A673 (cell line): ENCODE measurements at regions of chr10 and their contacts with region 1.

Region 1: GRCh38 chr10:22988581-22989360 is 60.9 kb downstream of the ARMC3 start:
- DNase-seq: peak; percentile 76
- H3K4me3 ChIP-seq: no peak overlapping the region
- H3K27ac ChIP-seq: no peak overlapping the region
- H3K4me1 ChIP-seq: peaks cover 5% of the 10 kb centered on the region
- H3K27me3 ChIP-seq: no peaks in the 10 kb centered on the region
- CTCF ChIP-seq: peak; percentile 92

Region 2: GRCh38 chr10:21732067-21732772 is 1256.6 kb before region 1 on chr10:
- CTCF ChIA-PET with region 1: no interaction called
- POLR2A ChIA-PET with region 1: interaction called, 20 read pairs
- intact Hi-C with region 1: no loop called
- DNase-seq: peak; percentile 88
- H3K4me3 ChIP-seq: no peak overlapping the region
- H3K27ac ChIP-seq: no peak overlapping the region
- H3K4me1 ChIP-seq: peaks cover 73% of the 10 kb centered on the region
- H3K27me3 ChIP-seq: no peaks in the 10 kb centered on the region
- CTCF ChIP-seq: peak; percentile 94

Region 3: GRCh38 chr10:22340362-22341189 is 648.2 kb before region 1 on chr10:
- CTCF ChIA-PET with region 1: no interaction called
- POLR2A ChIA-PET with region 1: no interaction called
- intact Hi-C with region 1: loop called (anchors 10 kb)
- DNase-seq: peak; percentile 90
- H3K4me3 ChIP-seq: peak overlapping the region; percentile 73
- H3K27ac ChIP-seq: peak overlapping the region; percentile 92
- H3K4me1 ChIP-seq: peaks cover 22% of the 10 kb centered on the region
- H3K27me3 ChIP-seq: peaks cover 78% of the 10 kb centered on the region
- CTCF ChIP-seq: no peak

Region 4: DNA sequence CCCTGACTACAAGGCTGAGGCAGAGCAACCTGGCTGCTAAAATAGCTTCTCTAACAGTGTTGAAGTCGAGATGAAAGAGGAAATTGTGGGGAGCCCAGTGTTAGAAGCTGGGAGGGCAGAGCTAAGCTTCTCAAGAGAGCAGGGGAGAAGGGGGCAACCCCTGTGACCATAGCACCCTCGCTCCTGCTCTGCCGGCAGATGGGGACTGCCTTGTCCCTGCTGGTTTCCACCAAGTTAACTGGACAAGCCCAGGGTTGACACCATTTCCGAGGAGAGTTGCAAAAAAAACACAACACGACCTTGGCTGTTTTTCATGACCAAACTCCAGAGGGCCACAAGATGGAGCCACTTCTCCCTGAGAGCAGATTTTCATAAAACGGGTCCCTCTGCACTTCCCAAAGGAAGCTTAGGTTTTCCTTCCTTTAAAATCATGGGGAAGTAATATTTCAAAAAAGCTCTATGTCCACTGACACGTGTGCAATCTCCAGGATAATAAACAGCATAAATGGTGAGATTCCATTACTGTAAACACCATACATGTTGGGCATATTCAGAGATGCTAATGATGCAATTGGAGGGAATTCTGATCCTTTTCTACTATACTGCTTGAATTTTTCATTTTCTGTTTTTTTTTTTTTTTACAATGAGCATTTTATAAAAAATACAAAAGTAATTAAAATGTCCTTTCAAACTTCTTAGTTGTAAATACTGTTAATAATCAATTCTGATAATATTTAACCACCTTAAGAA is 414.8 kb before region 1 on chr10:
- CTCF ChIA-PET with region 1: interaction called, 5 read pairs
- POLR2A ChIA-PET with region 1: no interaction called
- intact Hi-C with region 1: loop called (anchors 5 kb)
- DNase-seq: peak; percentile 54
- H3K4me3 ChIP-seq: no peak overlapping the region
- H3K27ac ChIP-seq: no peak overlapping the region
- H3K4me1 ChIP-seq: no peaks in the 10 kb centered on the region
- H3K27me3 ChIP-seq: no peaks in the 10 kb centered on the region
- CTCF ChIP-seq: peak; percentile 68

Region 5: DNA sequence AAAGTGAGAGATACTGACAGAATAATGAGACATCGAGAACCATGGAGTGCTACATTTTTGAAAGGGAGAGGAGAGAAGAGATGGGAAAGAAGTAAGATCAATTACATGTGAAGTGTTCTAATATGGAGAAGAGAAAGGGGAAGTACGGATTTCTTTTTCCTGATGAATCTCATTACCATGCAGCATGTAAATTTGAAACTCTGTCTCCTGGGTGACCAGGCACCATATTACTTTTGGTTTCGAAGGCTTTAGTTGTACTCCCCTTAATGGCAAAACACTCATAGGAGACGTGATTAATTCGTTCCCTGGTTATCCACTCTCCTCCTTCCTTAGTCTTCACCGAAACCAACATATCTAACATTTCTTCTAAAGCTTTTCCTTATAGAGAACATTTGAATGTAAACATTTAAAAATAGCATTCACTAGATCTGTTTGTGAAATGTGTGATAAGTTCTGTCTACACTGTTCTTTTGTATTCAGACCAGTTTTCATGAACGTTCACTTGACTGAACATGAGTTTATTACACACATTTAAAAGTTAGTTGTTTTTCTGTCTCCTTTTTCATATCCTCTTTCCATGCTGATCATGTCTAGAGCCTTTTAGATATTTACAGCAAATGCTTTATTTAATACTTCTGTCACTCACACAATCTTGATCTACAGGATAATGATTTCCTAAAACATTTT is 26.4 kb after region 1 on chr10:
- CTCF ChIA-PET with region 1: no interaction called
- POLR2A ChIA-PET with region 1: no interaction called
- intact Hi-C with region 1: no loop called
- DNase-seq: no peak
- H3K4me3 ChIP-seq: no peak overlapping the region
- H3K27ac ChIP-seq: no peak overlapping the region
- H3K4me1 ChIP-seq: no peaks in the 10 kb centered on the region
- H3K27me3 ChIP-seq: peaks cover 13% of the 10 kb centered on the region
- CTCF ChIP-seq: no peak

Region 6: DNA sequence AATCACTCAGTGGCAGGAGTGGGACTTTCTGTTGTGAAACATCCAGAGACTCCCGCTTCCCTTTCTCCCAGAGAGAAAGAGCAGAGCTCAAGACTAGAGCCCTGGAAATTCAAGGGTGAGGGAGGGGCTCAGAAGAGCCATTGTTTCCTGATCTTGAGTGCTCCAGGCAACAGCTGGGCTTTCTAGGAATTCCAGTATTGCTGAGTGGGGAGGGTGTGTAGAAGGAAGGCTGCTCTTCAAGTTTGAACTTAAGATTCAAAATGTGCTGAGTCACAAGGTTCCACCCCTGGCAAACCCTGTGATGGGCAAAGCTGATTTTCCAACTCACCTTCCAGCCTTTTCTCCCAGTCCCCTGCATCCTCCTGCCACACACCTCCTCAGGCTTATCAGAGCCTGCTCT is 64.3 kb after region 1 on chr10:
- CTCF ChIA-PET with region 1: no interaction called
- POLR2A ChIA-PET with region 1: no interaction called
- intact Hi-C with region 1: no loop called
- DNase-seq: peak; percentile 56
- H3K4me3 ChIP-seq: no peak overlapping the region
- H3K27ac ChIP-seq: no peak overlapping the region
- H3K4me1 ChIP-seq: peaks cover 39% of the 10 kb centered on the region
- H3K27me3 ChIP-seq: no peaks in the 10 kb centered on the region
- CTCF ChIP-seq: no peak

Region 7: DNA sequence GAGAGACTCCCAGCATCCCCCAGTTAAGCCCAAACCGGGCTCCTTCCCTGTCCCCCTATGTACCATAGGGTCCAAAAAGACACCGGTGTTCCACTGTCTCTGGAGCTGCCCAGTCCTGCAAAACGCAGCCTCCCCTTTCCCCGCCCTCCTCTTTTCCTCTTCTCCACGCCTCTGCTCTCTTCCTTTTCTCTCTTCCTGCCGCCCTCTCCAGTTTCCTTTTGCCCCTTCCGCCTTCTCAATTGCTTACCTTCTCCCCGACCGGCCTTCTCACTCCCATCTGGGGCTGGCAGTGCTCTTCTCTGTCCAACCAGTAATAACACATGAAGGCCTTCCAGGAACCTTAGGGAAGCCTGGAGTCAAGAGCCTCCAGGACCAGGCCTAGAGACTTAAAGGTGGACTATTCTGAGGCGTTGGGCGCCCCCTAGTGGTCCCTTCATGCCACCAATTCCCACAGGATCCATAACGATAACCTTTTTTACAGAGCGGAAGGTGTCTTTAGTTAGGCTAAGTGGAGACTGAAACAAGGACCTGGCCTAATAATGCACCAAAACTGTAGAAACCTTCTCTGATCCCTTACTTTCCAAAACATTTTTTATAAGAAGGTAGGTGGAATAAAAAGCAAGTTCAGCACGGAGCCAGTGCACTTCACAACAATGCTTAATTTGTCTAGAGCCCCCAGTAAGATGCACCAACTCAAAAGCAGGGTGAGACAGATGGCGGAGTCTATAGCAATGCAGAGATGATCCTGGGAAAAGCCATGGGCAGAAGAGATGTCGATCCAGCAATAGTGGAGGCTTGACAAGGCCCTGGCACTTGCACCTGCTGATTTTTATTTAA is 79.4 kb after region 1 on chr10:
- CTCF ChIA-PET with region 1: no interaction called
- POLR2A ChIA-PET with region 1: no interaction called
- intact Hi-C with region 1: loop called (anchors 5 kb)
- DNase-seq: peak; percentile 79
- H3K4me3 ChIP-seq: no peak overlapping the region
- H3K27ac ChIP-seq: no peak overlapping the region
- H3K4me1 ChIP-seq: peaks cover 5% of the 10 kb centered on the region
- H3K27me3 ChIP-seq: no peaks in the 10 kb centered on the region
- CTCF ChIP-seq: peak; percentile 89

Region 8: DNA sequence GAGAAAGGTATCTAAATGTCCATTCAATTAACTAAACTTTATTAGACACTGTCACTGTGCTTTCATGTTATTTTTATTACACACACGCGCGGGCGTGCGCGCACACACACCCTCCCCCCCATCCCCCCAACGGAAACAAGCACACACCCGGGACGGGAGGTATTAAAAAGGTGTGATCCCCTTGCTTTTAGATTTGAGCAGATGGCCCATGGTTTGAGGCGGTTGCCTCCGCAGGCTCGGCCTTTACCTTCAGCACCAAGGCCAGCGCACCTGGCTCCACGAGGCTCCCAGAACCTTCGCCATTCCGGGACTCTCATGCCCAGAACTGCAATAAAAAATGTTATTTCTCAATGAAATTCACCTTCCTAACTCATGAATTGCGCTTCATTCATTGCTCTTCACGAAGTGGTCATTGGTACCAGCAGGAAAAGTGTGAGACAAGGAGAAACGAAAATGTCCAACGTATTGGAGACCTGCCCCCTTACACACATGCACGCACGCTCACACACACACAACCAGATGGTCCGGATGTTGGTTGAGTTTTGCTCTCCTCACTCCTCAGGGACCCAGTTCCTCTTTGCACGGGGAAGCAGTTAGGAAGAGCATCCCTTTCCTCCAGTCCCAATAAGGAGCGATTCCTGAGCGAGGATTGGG is 182.6 kb after region 1 on chr10:
- CTCF ChIA-PET with region 1: no interaction called
- POLR2A ChIA-PET with region 1: no interaction called
- intact Hi-C with region 1: no loop called
- DNase-seq: peak; percentile 61
- H3K4me3 ChIP-seq: no peak overlapping the region
- H3K27ac ChIP-seq: no peak overlapping the region
- H3K4me1 ChIP-seq: peaks cover 8% of the 10 kb centered on the region
- H3K27me3 ChIP-seq: peaks cover 98% of the 10 kb centered on the region
- CTCF ChIP-seq: no peak

Region 9: GRCh38 chr10:23376229-23376655 is 387.5 kb after region 1 on chr10:
- CTCF ChIA-PET with region 1: no interaction called
- POLR2A ChIA-PET with region 1: no interaction called
- intact Hi-C with region 1: no loop called
- DNase-seq: no peak
- H3K4me3 ChIP-seq: no peak overlapping the region
- H3K27ac ChIP-seq: no peak overlapping the region
- H3K4me1 ChIP-seq: peaks cover 5% of the 10 kb centered on the region
- H3K27me3 ChIP-seq: no peaks in the 10 kb centered on the region
- CTCF ChIP-seq: no peak